Activated CD4-positive, alpha-beta T cell treated with anti-CD3 and anti-CD28 coated beads for 36 hours (primary cell): ENCODE measurements at regions of chr13 and their contacts with region 1.

Region 1: DNA sequence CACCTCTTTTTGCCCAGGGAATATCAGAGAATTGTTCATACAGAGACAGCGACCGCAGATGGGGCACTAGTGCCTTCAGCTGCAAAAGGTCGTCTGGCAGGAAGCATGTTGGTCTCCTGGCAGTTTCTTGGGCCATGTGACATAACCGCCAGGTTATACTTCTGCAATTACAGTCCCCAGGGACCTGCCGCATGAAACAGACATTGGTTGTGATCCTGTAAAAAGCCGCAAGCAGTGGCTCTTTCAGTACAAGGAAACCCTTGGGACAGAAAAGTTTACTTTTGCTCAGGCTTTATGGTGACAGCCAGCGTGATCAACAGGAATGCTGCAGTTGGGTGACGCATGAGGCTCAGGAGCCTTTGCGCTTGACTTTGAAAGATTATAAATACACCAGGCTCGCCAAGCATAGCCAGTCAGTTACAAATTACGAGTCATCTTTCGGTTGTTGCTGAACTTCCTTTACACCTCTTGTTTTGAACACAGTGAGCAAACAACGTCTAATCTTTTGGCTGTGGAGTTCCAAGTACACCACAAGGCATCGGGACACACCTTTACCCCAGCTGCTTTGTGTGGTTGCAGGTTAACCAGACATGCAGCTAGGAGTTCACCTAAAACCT is 50.5 kb upstream of the UBE2L5 start:
- DNase-seq: peak; percentile 81
- ATAC-seq: peak; percentile 67
- H3K4me3 Mint-ChIP-seq: peak overlapping the region; percentile 59
- H3K27ac Mint-ChIP-seq: peak overlapping the region; percentile 69
- H3K4me1 Mint-ChIP-seq: peaks cover 75% of the 10 kb centered on the region
- H3K27me3 Mint-ChIP-seq: no peaks in the 10 kb centered on the region

Region 2: DNA sequence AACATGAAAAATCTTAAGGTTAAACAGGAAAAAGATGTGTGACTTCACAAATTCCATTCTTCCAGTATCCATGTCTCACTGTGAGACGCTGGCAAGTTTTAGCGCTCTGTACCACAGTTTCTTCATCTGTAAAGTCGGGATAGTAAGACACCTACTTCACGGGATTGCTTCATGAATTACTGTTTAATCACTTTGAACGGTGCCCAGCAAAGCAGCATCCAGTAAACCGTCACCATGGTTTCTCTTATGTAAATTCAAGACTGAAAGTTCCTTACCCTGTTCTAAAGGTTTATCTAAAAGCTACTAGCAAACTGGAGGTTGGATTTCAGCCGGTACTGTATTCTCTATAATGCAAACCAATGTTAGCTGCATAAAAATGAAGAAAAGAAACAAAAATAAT is 117.9 kb before region 1 on chr13:
- CTCF ChIA-PET with region 1: no interaction called
- POLR2A ChIA-PET with region 1: no interaction called
- intact Hi-C with region 1: loop called in 1 of 2 experiments (anchors 1 kb)
- DNase-seq: no peak
- ATAC-seq: peak; percentile 53
- H3K4me3 Mint-ChIP-seq: no peak overlapping the region
- H3K27ac Mint-ChIP-seq: peak overlapping the region; percentile 14
- H3K4me1 Mint-ChIP-seq: peaks cover 22% of the 10 kb centered on the region
- H3K27me3 Mint-ChIP-seq: no peaks in the 10 kb centered on the region

Region 3: GRCh38 chr13:30268673-30269072 is 103.1 kb before region 1 on chr13:
- CTCF ChIA-PET with region 1: no interaction called
- POLR2A ChIA-PET with region 1: no interaction called
- intact Hi-C with region 1: no loop called
- DNase-seq: no peak
- ATAC-seq: no peak
- H3K4me3 Mint-ChIP-seq: no peak overlapping the region
- H3K27ac Mint-ChIP-seq: no peak overlapping the region
- H3K4me1 Mint-ChIP-seq: no peaks in the 10 kb centered on the region
- H3K27me3 Mint-ChIP-seq: no peaks in the 10 kb centered on the region

Region 4: GRCh38 chr13:30388406-30389283 is 16.9 kb after region 1 on chr13:
- CTCF ChIA-PET with region 1: interaction called, 10 read pairs
- POLR2A ChIA-PET with region 1: interaction called, 3 read pairs
- intact Hi-C with region 1: no loop called
- DNase-seq: no peak
- ATAC-seq: peak; percentile 25
- H3K4me3 Mint-ChIP-seq: peak overlapping the region; percentile 57
- H3K27ac Mint-ChIP-seq: peak overlapping the region; percentile 77
- H3K4me1 Mint-ChIP-seq: peaks cover 27% of the 10 kb centered on the region
- H3K27me3 Mint-ChIP-seq: no peaks in the 10 kb centered on the region

Region 5: DNA sequence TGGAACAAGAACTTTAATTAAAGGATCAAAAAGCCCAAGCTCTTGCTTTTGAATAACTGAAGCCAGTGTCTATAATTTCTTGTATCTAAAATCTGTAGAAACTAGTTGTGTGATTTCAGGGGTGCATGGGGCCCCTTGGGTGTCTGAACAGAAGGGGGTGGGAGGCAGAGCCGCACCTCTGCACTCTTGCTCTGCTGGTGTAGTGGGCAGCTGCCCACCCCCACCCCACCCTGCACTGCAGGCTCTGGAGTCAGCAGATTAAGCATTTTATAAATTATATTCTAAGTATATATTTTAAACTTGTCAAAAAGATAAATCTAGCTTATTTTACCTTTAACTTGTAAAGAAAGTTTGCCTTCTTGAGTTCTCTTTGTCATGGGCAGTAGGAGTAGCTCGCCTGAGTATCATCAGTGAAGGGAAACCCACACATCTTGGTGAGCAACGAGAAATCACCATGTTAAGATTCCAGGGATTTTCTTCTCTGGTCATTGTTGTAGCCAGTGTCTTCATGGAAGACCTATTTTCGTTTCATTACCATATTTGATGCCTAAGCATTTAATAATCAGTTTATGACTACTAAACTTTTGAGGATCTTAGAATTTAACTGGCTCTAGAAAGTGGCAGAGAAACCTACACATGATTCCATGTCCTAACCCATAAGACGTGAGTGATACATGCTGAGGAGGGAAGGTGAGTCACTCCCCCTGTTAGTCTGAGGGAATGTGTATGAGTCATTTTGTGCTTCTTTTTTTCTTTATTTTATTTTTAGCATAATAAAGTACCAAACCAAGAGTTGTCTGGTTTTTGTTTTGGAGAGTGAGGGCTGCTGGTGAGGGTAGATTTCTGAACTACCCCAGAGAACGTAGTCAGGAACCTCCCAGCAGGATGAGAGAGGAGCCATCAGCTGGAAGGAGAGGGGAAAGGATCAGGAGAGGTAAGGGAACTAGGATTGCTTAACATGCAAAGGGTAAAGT is 58.3 kb after region 1 on chr13:
- CTCF ChIA-PET with region 1: interaction called, 5 read pairs
- POLR2A ChIA-PET with region 1: no interaction called
- intact Hi-C with region 1: loop called in 1 of 2 experiments (anchors 2 kb)
- DNase-seq: peak; percentile 50
- ATAC-seq: peak; percentile 99
- H3K4me3 Mint-ChIP-seq: peak overlapping the region; percentile 37
- H3K27ac Mint-ChIP-seq: peak overlapping the region; percentile 93
- H3K4me1 Mint-ChIP-seq: peaks cover 30% of the 10 kb centered on the region
- H3K27me3 Mint-ChIP-seq: no peaks in the 10 kb centered on the region